Transverse colon (tissue), 4 donors: ENCODE measurements at regions of chr7 and their contacts with region 1.

Region 1: GRCh38 chr7:48074204-48074654 is 14.8 kb upstream of the UPP1 start:
- DNase-seq: no peak
- H3K4me3 ChIP-seq: no peak overlapping the region
- H3K27ac ChIP-seq: no peak overlapping the region
- H3K4me1 ChIP-seq: peaks cover 0 to 14% (median 6%) of the 10 kb centered on the region in 4 donors
- H3K27me3 ChIP-seq: no peaks in the 10 kb centered on the region
- CTCF ChIP-seq: no peak
- EP300 ChIP-seq: no peak
- POLR2A ChIP-seq: no peak

Region 2: DNA sequence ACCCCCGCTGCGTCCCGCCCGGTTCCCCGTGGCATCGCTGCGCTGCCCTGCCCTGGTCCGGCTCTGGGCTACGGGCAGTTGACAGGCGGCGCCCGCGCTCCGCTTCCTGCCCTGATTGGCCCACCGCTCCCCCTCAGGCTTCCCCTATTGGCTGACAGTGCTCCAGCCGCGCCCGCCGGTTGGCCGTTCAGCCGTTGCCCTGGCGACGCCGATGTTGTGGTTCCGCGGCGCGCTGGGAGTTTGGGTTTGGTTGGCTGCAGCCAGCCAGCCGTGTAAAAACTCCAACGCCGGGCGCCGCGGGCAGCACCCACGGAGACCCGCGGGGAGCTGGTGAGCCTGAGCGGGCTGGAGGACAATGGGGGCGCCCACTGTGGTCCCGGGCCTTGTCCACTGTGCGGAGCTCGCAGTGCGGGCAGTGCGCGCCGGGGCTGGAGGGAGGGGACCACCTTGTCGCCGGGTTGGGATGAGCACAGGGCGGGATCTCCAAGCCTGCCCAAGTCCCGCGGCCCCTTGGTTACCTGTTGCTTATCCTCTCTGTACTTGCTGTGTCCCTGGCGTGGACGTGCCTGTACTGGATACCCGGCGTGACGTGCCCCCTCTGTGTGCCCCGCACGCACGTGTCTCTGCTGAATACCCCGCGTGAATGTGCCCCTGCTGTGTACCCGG is 38.8 kb before region 1 on chr7 and contains the start of gene C7orf57:
- in situ Hi-C with region 1: no loop called
- intact Hi-C with region 1: loop called (anchors 1 kb)
- DNase-seq: peak; percentile 91
- H3K4me3 ChIP-seq: peak within 1 kb of the TSS; percentile 8 to 54 (median 38)
- H3K27ac ChIP-seq: no peak within 1 kb of the TSS
- H3K4me1 ChIP-seq: peaks cover 8 to 14% (median 12%) of the 10 kb centered on the region in 4 donors
- H3K27me3 ChIP-seq: peaks cover 33% of the 10 kb centered on the region
- CTCF ChIP-seq: peak in 1 of 5 experiments; percentile 18
- EP300 ChIP-seq: no peak
- POLR2A ChIP-seq: no peak
- total RNA-seq, gene C7orf57: not detected

Region 3: GRCh38 chr7:48628793-48629349 is 554.6 kb after region 1 on chr7:
- in situ Hi-C with region 1: no loop called
- intact Hi-C with region 1: no loop called
- DNase-seq: no peak
- H3K4me3 ChIP-seq: no peak overlapping the region
- H3K27ac ChIP-seq: no peak overlapping the region
- H3K4me1 ChIP-seq: no peaks in the 10 kb centered on the region
- H3K27me3 ChIP-seq: no peaks in the 10 kb centered on the region
- CTCF ChIP-seq: no peak
- EP300 ChIP-seq: no peak
- POLR2A ChIP-seq: no peak